ENCODE measurements at regions of chr20 and their contacts with region 1.

Region 1: DNA sequence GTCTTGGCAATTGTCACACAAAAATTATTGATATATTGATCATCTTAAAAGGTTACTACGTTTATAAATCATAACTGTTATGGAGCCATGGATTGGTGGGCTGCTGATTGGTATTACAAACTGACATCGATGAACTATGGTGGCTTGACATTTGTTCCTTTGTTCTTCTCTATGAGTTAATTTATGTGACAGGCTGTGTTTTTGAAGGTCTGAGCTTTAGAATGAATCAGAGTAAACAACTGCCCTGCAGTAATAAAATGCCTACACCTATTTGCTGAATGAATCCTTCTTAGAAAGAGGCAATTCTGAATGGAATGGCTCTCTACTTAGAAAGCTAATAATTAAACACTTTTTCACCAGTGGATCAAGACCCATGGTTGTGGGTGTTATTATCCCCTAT is 506.3 kb upstream of the SPTLC3 start:
- DNase-seq: no peak
- ATAC-seq: no peak
- H3K4me3 ChIP-seq: no peak overlapping the region
- H3K4me3 Mint-ChIP-seq: no peak overlapping the region
- H3K27ac ChIP-seq: no peak overlapping the region
- H3K27ac Mint-ChIP-seq: no peak overlapping the region
- H3K4me1 ChIP-seq: no peaks in the 10 kb centered on the region
- H3K4me1 Mint-ChIP-seq: no peaks in the 10 kb centered on the region
- H3K27me3 ChIP-seq: no peaks in the 10 kb centered on the region
- H3K27me3 Mint-ChIP-seq: no peaks in the 10 kb centered on the region

Region 2: GRCh38 chr20:11459090-11459890 is 1043.2 kb before region 1 on chr20:
- CTCF ChIA-PET with region 1: no interaction called
- POLR2A ChIA-PET with region 1: interaction called in 1 of 2 experiments, 12 read pairs
- DNase-seq: no peak
- ATAC-seq: no peak
- H3K4me3 ChIP-seq: no peak overlapping the region
- H3K4me3 Mint-ChIP-seq: no peak overlapping the region
- H3K27ac ChIP-seq: no peak overlapping the region
- H3K27ac Mint-ChIP-seq: no peak overlapping the region
- H3K4me1 ChIP-seq: no peaks in the 10 kb centered on the region
- H3K4me1 Mint-ChIP-seq: no peaks in the 10 kb centered on the region
- H3K27me3 ChIP-seq: no peaks in the 10 kb centered on the region
- H3K27me3 Mint-ChIP-seq: no peaks in the 10 kb centered on the region

Measured in T-cell (primary cell).